Stomach (tissue), 19 donors: ENCODE measurements at regions of chr2 and their contacts with region 1.

Region 1: DNA sequence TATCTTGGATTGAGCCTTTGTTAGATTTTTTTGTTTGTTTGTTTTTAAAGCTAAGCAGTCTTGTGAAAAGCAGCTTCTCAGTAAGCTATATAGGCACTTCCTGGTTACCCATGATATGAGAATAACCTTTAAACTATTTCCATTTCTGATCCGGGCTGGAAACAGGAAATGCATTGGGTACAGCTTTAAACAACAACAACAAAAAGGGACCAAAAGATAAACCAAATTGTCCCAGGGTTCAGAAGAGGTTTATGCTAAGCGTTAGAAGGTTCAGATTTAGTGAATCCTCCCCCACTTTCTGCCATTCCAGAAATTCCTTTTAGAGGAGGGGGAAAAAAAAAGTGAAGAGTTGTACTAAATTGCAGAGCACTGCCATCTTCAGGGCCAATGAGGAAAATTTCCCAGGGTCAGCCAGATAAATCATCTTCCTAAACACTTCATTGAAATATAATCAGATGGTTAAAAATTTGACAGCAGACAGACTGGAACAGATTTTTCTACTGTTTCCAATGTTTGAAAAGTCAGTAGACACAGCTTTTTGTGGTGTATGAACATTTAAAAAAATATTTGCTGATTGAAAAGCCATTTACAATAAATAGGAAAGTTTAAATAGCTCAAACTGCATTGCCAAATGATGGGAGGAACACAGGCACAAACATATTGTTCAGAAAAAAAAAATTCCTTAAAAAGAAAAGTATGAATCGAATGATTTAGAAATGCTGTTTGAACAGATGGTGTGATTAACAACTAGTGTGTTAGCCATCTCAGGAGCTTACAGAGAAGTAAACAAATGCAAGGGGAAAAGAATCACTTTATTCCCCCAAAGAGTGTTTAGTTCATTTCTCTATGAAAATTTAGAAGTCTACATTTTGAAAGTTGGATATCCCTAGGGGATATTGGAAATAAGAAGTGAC is 189.9 kb upstream of the TANK start:
- DNase-seq: peak in 1 of 2 donors; percentile 88
- H3K4me3 ChIP-seq: peak overlapping the region in 1 of 4 donors; percentile 25
- H3K27ac ChIP-seq: peak overlapping the region in 4 of 5 donors; percentile 43 to 58 (median 52)
- H3K4me1 ChIP-seq: peaks cover 0 to 5% (median 0%) of the 10 kb centered on the region in 4 donors
- H3K27me3 ChIP-seq: no peaks in the 10 kb centered on the region
- CTCF ChIP-seq: peak in 5 of 7 experiments; percentile 32 to 70 (median 57)
- EP300 ChIP-seq: no peak
- POLR2A ChIP-seq: no peak

Region 2: GRCh38 chr2:160109936-160110673 is 860.2 kb before region 1 on chr2:
- intact Hi-C with region 1: loop called (anchors 10 kb)
- DNase-seq: peak; percentile 57 to 92
- H3K4me3 ChIP-seq: no peak overlapping the region
- H3K27ac ChIP-seq: no peak overlapping the region
- H3K4me1 ChIP-seq: no peaks in the 10 kb centered on the region
- H3K27me3 ChIP-seq: no peaks in the 10 kb centered on the region
- CTCF ChIP-seq: peak in 5 of 7 experiments; percentile 34 to 63 (median 57)
- EP300 ChIP-seq: no peak
- POLR2A ChIP-seq: no peak

Region 3: GRCh38 chr2:161199912-161200701 is 229.8 kb after region 1 on chr2:
- intact Hi-C with region 1: no loop called
- DNase-seq: peak in 1 of 2 donors; percentile 3
- H3K4me3 ChIP-seq: no peak overlapping the region
- H3K27ac ChIP-seq: no peak overlapping the region
- H3K4me1 ChIP-seq: peaks cover 0 to 21% (median 7%) of the 10 kb centered on the region in 4 donors
- H3K27me3 ChIP-seq: no peaks in the 10 kb centered on the region
- CTCF ChIP-seq: no peak
- EP300 ChIP-seq: no peak
- POLR2A ChIP-seq: no peak

Region 4: GRCh38 chr2:161265874-161266273 is 295.6 kb after region 1 on chr2:
- intact Hi-C with region 1: no loop called
- DNase-seq: no peak
- H3K4me3 ChIP-seq: no peak overlapping the region
- H3K27ac ChIP-seq: no peak overlapping the region
- H3K4me1 ChIP-seq: no peaks in the 10 kb centered on the region
- H3K27me3 ChIP-seq: no peaks in the 10 kb centered on the region
- CTCF ChIP-seq: no peak
- EP300 ChIP-seq: no peak
- POLR2A ChIP-seq: no peak